Activated CD8-positive, alpha-beta T cell treated with anti-CD3 and anti-CD28 coated beads, Interleukin-2, amount 10 ng/mL, durations not matched to agents 7 days and 5 days (primary cell): ENCODE measurements at regions of chr1 and their contacts with region 1.

Region 1: GRCh38 chr1:67561704-67562113 is 123.3 kb upstream of the GADD45A start:
- DNase-seq: peak; percentile 89
- ATAC-seq: peak; percentile 97
- H3K4me3 Mint-ChIP-seq: no peak overlapping the region
- H3K27ac Mint-ChIP-seq: no peak overlapping the region
- H3K4me1 Mint-ChIP-seq: peaks cover 2% of the 10 kb centered on the region
- H3K27me3 Mint-ChIP-seq: no peaks in the 10 kb centered on the region

Region 2: DNA sequence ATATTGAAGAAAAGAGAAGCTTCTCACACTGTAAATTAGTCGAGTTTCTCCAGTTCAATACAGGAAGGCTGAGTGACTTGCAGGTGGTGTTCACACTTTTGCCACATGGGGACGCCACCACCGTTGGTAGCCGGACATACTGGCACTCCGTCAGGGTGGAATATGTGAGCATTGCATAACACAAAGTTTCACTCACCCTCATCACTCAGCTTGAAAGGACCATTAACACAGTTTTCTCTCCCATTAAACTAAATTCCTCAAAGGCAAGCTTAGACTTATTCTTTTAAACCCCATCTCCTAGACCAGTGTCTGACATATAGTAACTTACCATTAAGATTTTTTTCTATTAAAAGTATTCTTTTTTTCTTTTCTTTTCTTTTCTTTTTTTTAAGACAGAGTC is 26.2 kb before region 1 on chr1:
- CTCF ChIA-PET with region 1: interaction called, 10 read pairs
- POLR2A ChIA-PET with region 1: no interaction called
- DNase-seq: peak; percentile 70
- ATAC-seq: peak; percentile 59
- H3K4me3 Mint-ChIP-seq: no peak overlapping the region
- H3K27ac Mint-ChIP-seq: no peak overlapping the region
- H3K4me1 Mint-ChIP-seq: peaks cover 13% of the 10 kb centered on the region
- H3K27me3 Mint-ChIP-seq: peaks cover 5% of the 10 kb centered on the region

Region 3: DNA sequence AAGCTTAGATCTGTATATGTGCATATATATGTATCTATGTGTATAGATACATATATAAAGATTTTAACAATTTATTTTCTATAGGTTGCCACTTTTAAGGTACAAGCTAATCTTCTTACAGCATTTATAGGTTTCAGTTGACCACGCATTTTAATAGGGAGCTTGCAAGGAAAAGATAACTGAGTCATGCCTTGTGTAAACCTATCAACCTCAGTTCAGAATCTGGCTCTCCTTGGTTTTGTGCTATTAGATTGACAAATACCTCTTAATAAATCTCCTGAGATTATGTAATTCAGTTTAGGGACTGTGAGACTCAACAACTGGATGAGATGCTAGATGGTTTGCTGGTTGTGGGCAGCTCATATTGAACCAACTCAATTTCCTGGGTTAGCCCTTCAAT is 16.8 kb before region 1 on chr1:
- CTCF ChIA-PET with region 1: interaction called, 10 read pairs
- POLR2A ChIA-PET with region 1: no interaction called
- DNase-seq: no peak
- ATAC-seq: no peak
- H3K4me3 Mint-ChIP-seq: no peak overlapping the region
- H3K27ac Mint-ChIP-seq: no peak overlapping the region
- H3K4me1 Mint-ChIP-seq: no peaks in the 10 kb centered on the region
- H3K27me3 Mint-ChIP-seq: peaks cover 8% of the 10 kb centered on the region

Region 4: DNA sequence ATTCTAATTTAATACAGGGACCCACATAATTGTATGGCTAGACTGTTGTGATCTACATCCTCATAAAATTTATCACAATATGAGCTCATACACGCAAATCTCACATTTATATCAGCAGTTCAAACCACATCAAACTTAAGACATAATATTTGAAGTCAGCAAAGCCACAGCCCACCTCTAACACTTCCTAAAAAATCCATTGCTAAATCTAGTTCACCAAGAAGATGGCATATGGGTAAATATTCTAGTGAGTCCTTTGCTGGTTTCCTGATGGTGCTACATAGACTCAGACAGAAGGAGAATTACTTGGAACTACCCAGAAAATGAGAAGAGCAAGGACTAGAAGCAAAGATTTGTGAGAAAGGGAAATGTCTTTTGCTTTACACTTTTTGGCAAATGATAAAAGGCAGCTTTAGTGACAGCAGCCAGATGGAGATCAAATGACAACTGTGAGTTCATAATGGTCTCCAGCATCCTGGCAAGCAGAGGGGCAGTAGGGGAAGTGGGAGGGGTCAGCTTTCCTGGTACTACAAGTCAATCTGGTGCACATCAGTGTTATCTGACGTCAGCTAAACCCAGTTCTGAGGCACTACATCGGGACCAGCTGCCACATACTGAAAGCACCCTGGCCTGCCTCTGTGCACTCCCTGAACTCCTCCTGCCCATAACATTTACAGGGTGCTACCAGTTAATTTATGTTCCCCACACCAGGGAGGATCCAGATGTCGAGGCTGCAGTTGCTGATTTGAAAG is 112.7 kb after region 1 on chr1:
- CTCF ChIA-PET with region 1: interaction called, 13 read pairs
- POLR2A ChIA-PET with region 1: no interaction called
- DNase-seq: peak; percentile 73
- ATAC-seq: peak; percentile 85
- H3K4me3 Mint-ChIP-seq: peak overlapping the region; percentile 36
- H3K27ac Mint-ChIP-seq: peak overlapping the region; percentile 75
- H3K4me1 Mint-ChIP-seq: peaks cover 24% of the 10 kb centered on the region
- H3K27me3 Mint-ChIP-seq: peaks cover 12% of the 10 kb centered on the region

Region 5: DNA sequence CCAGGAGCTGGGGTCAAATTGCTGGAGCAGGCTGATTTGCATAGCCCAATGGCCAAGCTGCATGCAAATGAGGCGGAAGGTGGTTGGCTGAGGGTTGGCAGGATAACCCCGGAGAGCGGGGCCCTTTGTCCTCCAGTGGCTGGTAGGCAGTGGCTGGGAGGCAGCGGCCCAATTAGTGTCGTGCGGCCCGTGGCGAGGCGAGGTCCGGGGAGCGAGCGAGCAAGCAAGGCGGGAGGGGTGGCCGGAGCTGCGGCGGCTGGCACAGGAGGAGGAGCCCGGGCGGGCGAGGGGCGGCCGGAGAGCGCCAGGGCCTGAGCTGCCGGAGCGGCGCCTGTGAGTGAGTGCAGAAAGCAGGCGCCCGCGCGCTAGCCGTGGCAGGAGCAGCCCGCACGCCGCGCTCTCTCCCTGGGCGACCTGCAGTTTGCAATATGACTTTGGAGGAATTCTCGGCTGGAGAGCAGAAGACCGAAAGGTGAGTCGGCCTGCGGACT is 123.4 kb after region 1 on chr1 and contains the start of gene GADD45A:
- CTCF ChIA-PET with region 1: interaction called, 13 read pairs
- POLR2A ChIA-PET with region 1: no interaction called
- DNase-seq: peak; percentile 98
- ATAC-seq: peak; percentile 95
- H3K4me3 Mint-ChIP-seq: peak within 1 kb of the TSS; percentile 95
- H3K27ac Mint-ChIP-seq: peak within 1 kb of the TSS; percentile 90
- H3K4me1 Mint-ChIP-seq: peaks cover 38% of the 10 kb centered on the region
- H3K27me3 Mint-ChIP-seq: peaks cover 4% of the 10 kb centered on the region
- total RNA-seq, gene GADD45A: 17.9 to 21.7 TPM

Region 6: DNA sequence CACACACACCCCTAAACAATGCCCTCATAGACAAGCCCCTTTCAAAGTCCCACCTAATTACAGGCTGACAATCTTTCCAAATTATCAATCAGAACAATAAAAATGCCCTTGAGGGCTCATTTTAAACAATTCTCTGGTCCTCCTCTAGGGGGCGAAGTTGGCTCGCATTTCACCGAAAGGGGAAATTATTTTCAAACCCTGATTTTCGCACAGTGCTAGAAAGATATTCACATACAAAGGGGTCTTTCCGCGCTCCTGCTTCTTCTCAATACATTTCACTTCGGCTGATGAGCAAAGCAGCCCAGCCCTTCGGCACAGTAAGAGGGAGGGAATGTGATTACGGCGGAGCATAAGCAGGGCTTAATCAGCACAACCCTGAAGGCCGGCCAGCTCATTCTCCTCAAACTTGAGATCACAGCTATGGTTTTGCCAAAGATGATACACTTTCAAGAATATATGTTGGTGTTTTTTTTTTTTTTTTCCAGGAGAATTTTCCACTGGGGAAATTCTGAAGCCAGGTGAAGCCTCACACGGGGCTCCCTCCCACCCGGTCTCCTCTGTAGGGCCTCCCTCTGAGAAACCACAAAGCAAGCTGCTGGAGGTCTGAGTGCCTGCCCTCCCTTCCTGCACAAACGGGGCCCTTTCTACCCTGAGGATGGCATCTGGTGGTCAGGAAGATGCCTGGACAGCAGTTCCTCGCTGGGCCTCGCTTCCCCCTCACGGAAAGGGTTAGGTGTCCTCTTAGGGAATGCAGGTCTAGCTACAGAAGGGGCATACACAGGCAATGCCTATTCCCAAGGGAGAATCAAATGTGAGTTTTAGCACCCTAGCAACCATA is 204.7 kb after region 1 on chr1:
- CTCF ChIA-PET with region 1: interaction called, 177 read pairs
- POLR2A ChIA-PET with region 1: no interaction called
- DNase-seq: peak; percentile 58
- ATAC-seq: peak; percentile 60
- H3K4me3 Mint-ChIP-seq: peak overlapping the region; percentile 40
- H3K27ac Mint-ChIP-seq: no peak overlapping the region
- H3K4me1 Mint-ChIP-seq: peaks cover 8% of the 10 kb centered on the region
- H3K27me3 Mint-ChIP-seq: peaks cover 31% of the 10 kb centered on the region